ENCODE measurements at regions of chr20 and their contacts with region 1.

Region 1: GRCh38 chr20:22586645-22587310 is 2.4 kb upstream of the FOXA2 start:
- H3K4me3 ChIP-seq: peak overlapping the region; percentile 22
- H3K27ac ChIP-seq: peak overlapping the region; percentile 31; the same call in 1 of the 2 replicates
- H3K4me1 ChIP-seq: 0 out of 2 replicates have a peak, but pooled peaks cover 2% of the 10 kb centered on the region
- CTCF ChIP-seq: peak; percentile 80

Region 2: DNA sequence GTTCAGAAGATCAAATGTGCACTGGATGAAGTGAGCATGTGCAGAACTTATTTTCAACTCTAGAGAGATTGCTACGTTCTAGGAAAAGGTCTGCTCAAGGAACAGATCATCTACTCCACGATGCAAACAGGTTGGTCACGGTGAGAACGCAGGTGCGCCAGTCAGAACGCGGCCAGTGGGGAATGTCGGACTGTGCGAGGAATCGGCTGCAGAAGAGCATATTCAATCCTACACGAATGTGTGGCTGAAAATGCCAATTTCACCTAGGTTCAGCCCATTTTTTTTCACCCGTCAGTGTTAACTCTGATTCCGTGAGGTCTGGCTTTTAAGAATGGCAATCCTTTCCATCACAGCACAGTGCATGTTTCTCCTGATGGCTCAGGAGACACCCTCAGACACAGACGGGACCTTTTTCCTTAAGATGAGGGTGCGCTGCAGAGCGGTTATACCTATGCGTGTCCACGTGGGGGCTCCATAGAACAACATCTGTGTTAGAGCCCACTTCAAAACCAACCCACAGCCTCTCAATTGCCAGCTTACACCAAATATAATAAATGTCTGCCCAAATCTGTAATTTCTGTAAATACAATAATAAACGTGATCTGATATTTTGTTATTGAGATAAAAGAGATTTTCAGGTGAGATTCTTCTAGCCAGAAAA is 252.8 kb before region 1 on chr20:
- CTCF ChIA-PET with region 1: interaction called, 109 read pairs
- POLR2A ChIA-PET with region 1: no interaction called
- H3K4me3 ChIP-seq: no peak overlapping the region
- H3K27ac ChIP-seq: no peak overlapping the region
- H3K4me1 ChIP-seq: no peaks in the 10 kb centered on the region
- CTCF ChIP-seq: 0 out of 2 replicates have a peak, but pooled peaks have one; percentile 26

Region 3: GRCh38 chr20:22381812-22382416 is 204.9 kb before region 1 on chr20:
- CTCF ChIA-PET with region 1: interaction called, 11 read pairs
- POLR2A ChIA-PET with region 1: no interaction called
- H3K4me3 ChIP-seq: no peak overlapping the region
- H3K27ac ChIP-seq: no peak overlapping the region
- H3K4me1 ChIP-seq: no peaks in the 10 kb centered on the region
- CTCF ChIP-seq: no peak

Region 4: GRCh38 chr20:22546344-22546743 is 40.4 kb before region 1 on chr20:
- CTCF ChIA-PET with region 1: no interaction called
- POLR2A ChIA-PET with region 1: no interaction called
- H3K4me3 ChIP-seq: no peak overlapping the region
- H3K27ac ChIP-seq: no peak overlapping the region
- H3K4me1 ChIP-seq: no peaks in the 10 kb centered on the region
- CTCF ChIP-seq: no peak

Region 5: GRCh38 chr20:22575087-22575721 is 11.6 kb before region 1 on chr20:
- CTCF ChIA-PET with region 1: interaction called, 17 read pairs
- POLR2A ChIA-PET with region 1: no interaction called
- H3K4me3 ChIP-seq: no peak overlapping the region
- H3K27ac ChIP-seq: peak overlapping the region; percentile 28; the same call in 1 of the 2 replicates
- H3K4me1 ChIP-seq: peaks cover 12% of the 10 kb centered on the region
- CTCF ChIP-seq: no peak

Region 6: GRCh38 chr20:22684072-22684762 is 97.4 kb after region 1 on chr20:
- CTCF ChIA-PET with region 1: interaction called, 17 read pairs
- POLR2A ChIA-PET with region 1: no interaction called
- H3K4me3 ChIP-seq: no peak overlapping the region
- H3K27ac ChIP-seq: no peak overlapping the region
- H3K4me1 ChIP-seq: no peaks in the 10 kb centered on the region
- CTCF ChIP-seq: peak; percentile 79; the same call in 1 of the 2 replicates